ENCODE measurements at regions of chr5 and their contacts with region 1.

Region 1: GRCh38 chr5:127030259-127031146 is at the start of gene MARCHF3:
- DNase-seq: peak; percentile 98
- H3K4me3 ChIP-seq: peak within 1 kb of the TSS; percentile 83 to 93 (median 88)
- H3K27ac ChIP-seq: peak within 1 kb of the TSS; percentile 78
- H3K4me1 ChIP-seq: peaks cover 11% of the 10 kb centered on the region
- H3K27me3 ChIP-seq: no peaks in the 10 kb centered on the region
- CTCF ChIP-seq: peak in 1 of 2 donors; percentile 25
- POLR2A ChIP-seq: peak; percentile 94
- total RNA-seq, gene MARCHF3: 31.7 and 31.9 TPM in 2 replicates

Region 2: GRCh38 chr5:126753227-126753626 is 277.3 kb before region 1 on chr5:
- CTCF ChIA-PET with region 1: no interaction called
- POLR2A ChIA-PET with region 1: no interaction called
- dilution Hi-C with region 1: no loop called
- intact Hi-C with region 1: no loop called
- DNase-seq: no peak
- H3K4me3 ChIP-seq: no peak overlapping the region
- H3K27ac ChIP-seq: no peak overlapping the region
- H3K4me1 ChIP-seq: no peaks in the 10 kb centered on the region
- H3K27me3 ChIP-seq: no peaks in the 10 kb centered on the region
- CTCF ChIP-seq: no peak
- POLR2A ChIP-seq: no peak

Region 3: GRCh38 chr5:126972062-126972895 is 58.2 kb before region 1 on chr5:
- CTCF ChIA-PET with region 1: interaction called, 5 read pairs
- POLR2A ChIA-PET with region 1: no interaction called
- dilution Hi-C with region 1: no loop called
- intact Hi-C with region 1: loop called (anchors 1 kb)
- DNase-seq: peak; percentile 42
- H3K4me3 ChIP-seq: no peak overlapping the region
- H3K27ac ChIP-seq: no peak overlapping the region
- H3K4me1 ChIP-seq: peaks cover 27% of the 10 kb centered on the region
- H3K27me3 ChIP-seq: no peaks in the 10 kb centered on the region
- CTCF ChIP-seq: no peak
- POLR2A ChIP-seq: no peak

Region 4: DNA sequence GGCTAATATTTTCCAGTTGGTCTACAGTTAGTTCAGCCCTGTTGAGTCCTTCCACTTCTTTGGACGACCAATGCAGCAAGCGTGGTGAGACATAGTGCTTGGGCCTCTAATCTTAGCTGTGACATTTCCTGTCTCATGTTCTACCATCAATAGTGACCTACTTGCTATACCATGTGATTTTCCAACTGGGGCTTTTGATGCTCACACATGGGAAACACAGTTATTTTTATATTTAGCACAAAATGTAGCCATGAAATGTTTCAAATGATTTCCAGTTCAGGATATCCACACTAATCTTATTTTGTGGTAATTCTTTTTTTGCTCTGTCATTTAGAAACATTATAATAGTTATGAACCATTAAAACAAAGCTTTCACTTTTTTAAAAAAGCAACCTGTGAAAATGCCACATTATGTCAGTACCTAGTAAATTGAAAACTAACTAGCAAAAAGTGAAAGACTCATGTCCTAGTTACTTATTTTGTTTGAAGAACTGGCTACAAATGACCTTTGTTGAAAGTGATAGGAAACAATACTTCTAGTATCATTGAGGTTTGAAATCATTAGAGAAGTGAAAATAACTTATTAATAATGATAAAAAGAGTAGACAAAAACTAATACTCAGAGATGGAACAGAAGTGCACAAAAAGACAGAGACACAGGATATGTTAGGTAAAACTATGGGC is 18.4 kb before region 1 on chr5:
- CTCF ChIA-PET with region 1: interaction called, 24 read pairs
- POLR2A ChIA-PET with region 1: no interaction called
- dilution Hi-C with region 1: no loop called
- intact Hi-C with region 1: loop called (anchors 1 kb)
- DNase-seq: peak; percentile 43
- H3K4me3 ChIP-seq: no peak overlapping the region
- H3K27ac ChIP-seq: peak overlapping the region; percentile 83
- H3K4me1 ChIP-seq: peaks cover 40% of the 10 kb centered on the region
- H3K27me3 ChIP-seq: no peaks in the 10 kb centered on the region
- CTCF ChIP-seq: no peak
- POLR2A ChIP-seq: no peak

Region 5: GRCh38 chr5:127206320-127207113 is 176.0 kb after region 1 on chr5:
- CTCF ChIA-PET with region 1: no interaction called
- POLR2A ChIA-PET with region 1: no interaction called
- dilution Hi-C with region 1: no loop called
- intact Hi-C with region 1: loop called (anchors 1 kb)
- DNase-seq: peak; percentile 95
- H3K4me3 ChIP-seq: no peak overlapping the region
- H3K27ac ChIP-seq: peak overlapping the region; percentile 58
- H3K4me1 ChIP-seq: peaks cover 18% of the 10 kb centered on the region
- H3K27me3 ChIP-seq: peaks cover 0 to 2% of the 10 kb centered on the region in 2 experiments
- CTCF ChIP-seq: no peak
- POLR2A ChIP-seq: no peak

Region 6: GRCh38 chr5:127313847-127314473 is 283.5 kb after region 1 on chr5:
- CTCF ChIA-PET with region 1: interaction called, 3 read pairs
- POLR2A ChIA-PET with region 1: no interaction called
- dilution Hi-C with region 1: no loop called
- intact Hi-C with region 1: loop called (anchors 1 kb)
- DNase-seq: peak; percentile 69
- H3K4me3 ChIP-seq: no peak overlapping the region
- H3K27ac ChIP-seq: no peak overlapping the region
- H3K4me1 ChIP-seq: no peaks in the 10 kb centered on the region
- H3K27me3 ChIP-seq: peaks cover 26 to 47% of the 10 kb centered on the region in 2 experiments
- CTCF ChIP-seq: peak; percentile 78 to 85
- POLR2A ChIP-seq: no peak